Mammary epithelial cell (primary cell): ENCODE measurements at regions of chr9 and their contacts with region 1.

Region 1: DNA sequence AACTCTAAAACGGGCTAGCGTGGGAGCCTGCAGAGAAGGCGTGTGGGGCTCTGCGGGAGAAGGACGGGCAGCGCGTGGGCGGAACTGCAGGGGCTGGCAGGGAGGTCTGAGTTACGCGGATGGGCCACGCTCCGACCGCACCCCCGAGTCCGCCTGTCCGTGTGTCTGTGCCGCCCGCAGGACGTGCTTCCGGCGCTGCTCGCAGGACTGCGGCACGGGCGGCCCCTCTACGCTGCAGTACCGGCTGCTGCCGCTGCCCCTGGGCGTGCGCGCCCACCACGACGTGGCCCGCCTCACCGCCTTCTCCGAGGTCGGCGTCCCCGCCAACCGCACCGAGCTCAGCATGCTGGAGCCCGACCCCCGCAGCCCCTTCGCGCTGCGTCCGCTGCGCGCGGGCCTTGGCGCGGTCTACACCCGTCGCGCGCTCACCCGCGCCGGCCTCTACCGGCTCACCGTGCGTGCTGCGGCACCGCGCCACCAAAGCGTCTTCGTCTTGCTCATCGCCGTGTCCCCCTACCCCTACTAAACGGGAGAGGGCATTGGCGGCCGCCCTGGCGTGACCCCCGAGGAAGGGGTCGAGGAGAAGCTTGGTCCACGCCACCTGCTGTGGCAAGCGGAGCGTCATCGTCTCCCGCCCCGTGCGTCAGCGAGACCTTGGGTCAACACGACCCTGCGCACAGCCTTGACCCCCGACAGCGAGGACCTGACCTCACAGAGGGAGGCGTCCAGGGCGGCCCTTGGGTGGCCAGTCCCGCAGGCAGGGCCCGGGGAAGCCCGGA is 11.4 kb upstream of the ASS1 start:
- DNase-seq: peak; percentile 21
- H3K4me3 ChIP-seq: peak overlapping the region in 2 of 3 experiments; percentile 23 to 28
- H3K27ac ChIP-seq: no peak overlapping the region
- H3K4me1 ChIP-seq: peaks cover 16% of the 10 kb centered on the region
- H3K27me3 ChIP-seq: peaks cover 2% of the 10 kb centered on the region
- CTCF ChIP-seq: peak; percentile 7 to 33

Region 2: DNA sequence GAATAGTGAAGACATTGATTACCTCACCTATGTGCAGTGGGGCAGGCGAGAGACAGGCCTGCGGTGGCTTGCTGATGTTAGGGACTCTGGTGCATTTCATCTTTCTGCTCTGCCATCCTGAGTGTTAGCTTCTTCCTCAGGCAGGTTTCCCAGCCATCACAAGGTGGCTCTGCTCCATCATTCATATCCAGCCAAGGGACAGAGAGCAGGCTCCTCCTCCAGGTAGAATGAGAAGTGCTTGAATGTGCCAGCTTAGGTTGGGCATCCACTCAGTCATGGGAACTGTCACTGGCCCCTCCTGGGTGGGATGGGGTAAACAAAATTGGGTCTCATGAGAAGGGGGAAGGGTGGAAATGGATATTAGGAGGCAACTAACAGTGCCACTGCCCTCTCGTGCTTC is 354.8 kb before region 1 on chr9:
- CTCF ChIA-PET with region 1: no interaction called
- dilution Hi-C with region 1: no loop called
- in situ Hi-C with region 1: no loop called
- intact Hi-C with region 1: no loop called
- DNase-seq: no peak
- H3K4me3 ChIP-seq: no peak overlapping the region
- H3K27ac ChIP-seq: no peak overlapping the region
- H3K4me1 ChIP-seq: no peaks in the 10 kb centered on the region
- H3K27me3 ChIP-seq: no peaks in the 10 kb centered on the region
- CTCF ChIP-seq: peak in 1 of 2 donors; percentile 4

Region 3: DNA sequence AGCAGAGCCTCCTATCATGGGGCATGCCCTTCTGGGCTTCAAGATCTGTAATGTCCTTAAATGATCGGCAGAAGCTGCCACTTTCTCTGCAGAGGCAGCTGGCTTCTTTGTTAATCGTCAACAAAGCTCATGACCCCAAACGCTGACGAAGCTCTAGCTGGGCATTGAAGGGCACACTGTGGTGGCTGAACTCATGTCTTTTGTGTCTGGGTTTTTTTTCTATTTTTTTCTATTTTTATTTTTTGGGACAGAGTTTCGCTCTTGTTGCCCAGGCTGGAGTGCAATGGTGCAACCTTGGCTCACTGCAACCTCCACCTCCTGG is 53.7 kb before region 1 on chr9:
- CTCF ChIA-PET with region 1: no interaction called
- dilution Hi-C with region 1: loop called (anchors 5 kb)
- in situ Hi-C with region 1: no loop called
- intact Hi-C with region 1: no loop called
- DNase-seq: no peak
- H3K4me3 ChIP-seq: no peak overlapping the region
- H3K27ac ChIP-seq: no peak overlapping the region
- H3K4me1 ChIP-seq: no peaks in the 10 kb centered on the region
- H3K27me3 ChIP-seq: no peaks in the 10 kb centered on the region
- CTCF ChIP-seq: no peak

Region 4: GRCh38 chr9:130498298-130498917 is 65.1 kb after region 1 on chr9:
- CTCF ChIA-PET with region 1: no interaction called
- dilution Hi-C with region 1: loop called (anchors 5 kb)
- in situ Hi-C with region 1: no loop called
- intact Hi-C with region 1: no loop called
- DNase-seq: no peak
- H3K4me3 ChIP-seq: no peak overlapping the region
- H3K27ac ChIP-seq: no peak overlapping the region
- H3K4me1 ChIP-seq: no peaks in the 10 kb centered on the region
- H3K27me3 ChIP-seq: no peaks in the 10 kb centered on the region
- CTCF ChIP-seq: no peak